ENCODE measurements at regions of chr3 and their contacts with region 1.

Region 1: GRCh38 chr3:99753268-99753975 is 64.2 kb upstream of the CMSS1 start:
- DNase-seq: peak in 2 of 5 donors; percentile 18 to 27
- H3K4me3 ChIP-seq: no peak overlapping the region
- H3K27ac ChIP-seq: no peak overlapping the region
- H3K4me1 ChIP-seq: peaks cover 2% of the 10 kb centered on the region
- H3K27me3 ChIP-seq: no peaks in the 10 kb centered on the region
- CTCF ChIP-seq: peak; percentile 57 to 75 (median 58)
- EP300 ChIP-seq: no peak
- POLR2A ChIP-seq: no peak

Region 2: GRCh38 chr3:99023590-99024192 is 729.7 kb before region 1 on chr3:
- intact Hi-C with region 1: loop called in 3 of 4 experiments (anchors 5 to 10 kb)
- DNase-seq: no peak
- H3K4me3 ChIP-seq: no peak overlapping the region
- H3K27ac ChIP-seq: no peak overlapping the region
- H3K4me1 ChIP-seq: no peaks in the 10 kb centered on the region
- H3K27me3 ChIP-seq: no peaks in the 10 kb centered on the region
- CTCF ChIP-seq: peak; percentile 27 to 65 (median 46)
- EP300 ChIP-seq: no peak
- POLR2A ChIP-seq: no peak

Measured in ovary (tissue), 10 donors.